A549 (cell line): ENCODE measurements at regions of chr11 and their contacts with region 1.

Region 1: DNA sequence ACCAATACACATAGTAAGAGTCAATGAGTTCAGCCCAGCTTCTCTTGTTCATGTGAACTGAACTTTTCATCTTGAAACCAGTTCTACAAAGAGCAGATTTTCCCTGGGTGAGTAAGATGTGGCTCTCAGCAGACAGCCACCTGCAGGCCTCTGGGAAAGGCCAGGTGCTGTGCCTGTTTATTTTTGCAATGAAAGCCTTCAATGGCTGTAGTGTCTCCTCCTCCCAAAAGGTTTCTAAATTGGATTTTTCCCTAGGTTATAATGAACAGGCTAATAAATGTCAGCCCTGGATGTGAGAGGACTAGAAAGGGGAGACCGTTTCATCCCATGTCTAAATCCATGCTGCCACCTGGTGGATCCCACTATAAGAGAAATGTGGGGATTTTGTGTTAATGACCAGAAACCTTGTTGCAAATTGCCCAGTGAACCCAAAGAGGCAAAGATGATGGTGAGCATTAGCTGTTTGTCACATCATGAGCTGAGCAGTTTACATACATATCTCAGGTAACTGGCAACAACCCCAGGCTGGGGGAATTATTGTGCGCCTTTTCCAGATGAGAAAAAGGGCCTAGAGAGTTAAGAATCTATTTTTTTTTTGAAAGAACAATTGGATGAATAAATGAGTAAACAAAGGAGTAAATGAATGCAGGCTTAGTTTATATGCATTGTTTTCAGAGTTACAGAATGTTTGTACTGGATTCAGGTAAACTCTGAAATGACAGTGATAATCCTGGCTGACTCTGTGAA is 12.7 kb downstream of the C11orf91 start:
- DNase-seq: peak; percentile 70 to 76
- ATAC-seq: no peak
- H3K4me3 ChIP-seq: no peak overlapping the region
- H3K27ac ChIP-seq: peak overlapping the region; percentile 94 to 96; a peak in 5 of 6 replicates
- H3K4me1 ChIP-seq: peaks cover 45% of the 10 kb centered on the region
- CTCF ChIP-seq: peak; percentile 92
- EP300 ChIP-seq: no peak
- POLR2A ChIP-seq: no peak
- RAD21 ChIP-seq: peak; percentile 98 to 99

Region 2: DNA sequence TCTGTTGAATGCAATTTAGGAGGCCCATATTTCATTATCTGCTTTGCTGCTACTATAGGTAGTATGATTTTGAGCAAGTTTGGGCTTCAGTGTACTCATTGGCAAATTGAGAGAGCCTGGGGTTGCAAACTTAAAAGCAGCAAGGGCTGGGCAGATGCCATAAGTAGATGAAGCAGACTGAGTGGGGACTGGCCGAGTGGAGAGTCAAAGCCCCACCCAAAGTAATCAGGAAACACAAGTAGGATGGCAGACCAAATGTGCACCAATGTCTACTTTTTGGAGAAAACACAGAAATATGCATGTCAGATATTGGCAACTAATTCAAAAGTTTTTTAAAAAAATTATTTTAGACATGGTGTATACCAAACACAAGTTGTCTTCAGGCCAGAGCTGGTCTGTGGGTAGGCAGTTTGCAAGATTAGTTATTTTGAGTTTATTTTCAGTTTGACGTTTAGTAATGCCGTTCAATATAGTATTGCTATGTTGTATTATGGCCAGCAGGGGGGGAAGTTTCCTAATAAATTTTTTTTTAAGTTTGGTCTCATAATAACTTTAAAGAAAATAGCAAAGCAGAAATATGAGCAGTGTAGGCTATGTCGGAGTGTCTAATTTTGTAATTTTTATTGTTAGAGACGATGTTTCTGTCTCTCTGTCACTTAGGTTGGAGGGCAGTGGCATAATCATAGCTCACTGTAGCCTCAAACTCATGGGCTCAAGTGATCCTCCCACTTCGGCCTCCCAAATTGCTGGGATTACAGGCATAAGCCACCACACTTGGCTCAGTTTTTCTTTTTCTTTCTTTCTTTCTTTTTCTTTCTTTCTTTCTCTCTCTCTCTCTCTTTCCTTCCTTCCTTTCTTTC is 325.6 kb before region 1 on chr11:
- CTCF ChIA-PET with region 1: interaction called, 216 read pairs
- POLR2A ChIA-PET with region 1: no interaction called
- DNase-seq: peak; percentile 15 to 47
- ATAC-seq: peak; percentile 33 to 75; a peak in 4 of 6 replicates
- H3K4me3 ChIP-seq: no peak overlapping the region
- H3K27ac ChIP-seq: no peak overlapping the region
- H3K4me1 ChIP-seq: no peaks in the 10 kb centered on the region
- CTCF ChIP-seq: peak; percentile 83
- EP300 ChIP-seq: no peak
- POLR2A ChIP-seq: no peak
- RAD21 ChIP-seq: peak; percentile 85 to 92

Region 3: GRCh38 chr11:33542921-33543320 is 145.0 kb before region 1 on chr11:
- CTCF ChIA-PET with region 1: interaction called, 27 read pairs
- POLR2A ChIA-PET with region 1: no interaction called
- DNase-seq: peak; percentile 55 to 86
- ATAC-seq: peak; percentile 81 to 95; a peak in 5 of 6 replicates
- H3K4me3 ChIP-seq: no peak overlapping the region
- H3K27ac ChIP-seq: no peak overlapping the region
- H3K4me1 ChIP-seq: no peaks in the 10 kb centered on the region
- CTCF ChIP-seq: peak; percentile 68
- EP300 ChIP-seq: no peak
- POLR2A ChIP-seq: no peak
- RAD21 ChIP-seq: peak; percentile 71 to 77

Region 4: DNA sequence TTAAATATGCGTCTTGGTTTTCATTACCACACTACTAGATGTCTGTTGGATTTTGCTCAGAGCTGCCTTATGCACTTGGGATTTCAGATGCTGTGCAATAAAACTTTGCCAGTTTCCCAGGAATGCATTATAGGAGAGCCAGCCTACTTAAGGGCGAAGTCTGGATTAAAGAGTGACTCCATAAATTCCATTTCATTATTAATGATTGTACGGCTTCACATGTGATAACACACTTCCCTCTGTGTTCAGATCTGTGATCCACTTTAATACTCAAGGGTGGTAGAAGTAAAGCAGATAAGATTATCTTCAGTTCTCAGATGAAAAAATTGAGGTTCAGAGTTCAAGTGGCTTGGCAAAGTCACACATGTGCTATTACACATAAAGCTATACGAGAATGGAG is 97.5 kb before region 1 on chr11:
- CTCF ChIA-PET with region 1: no interaction called
- POLR2A ChIA-PET with region 1: no interaction called
- DNase-seq: no peak
- ATAC-seq: no peak
- H3K4me3 ChIP-seq: no peak overlapping the region
- H3K27ac ChIP-seq: no peak overlapping the region
- H3K4me1 ChIP-seq: no peaks in the 10 kb centered on the region
- CTCF ChIP-seq: no peak
- EP300 ChIP-seq: no peak
- POLR2A ChIP-seq: no peak
- RAD21 ChIP-seq: no peak

Region 5: GRCh38 chr11:33700425-33701271 is 12.7 kb after region 1 on chr11 and contains the start of gene C11orf91:
- CTCF ChIA-PET with region 1: interaction called, 10 read pairs
- POLR2A ChIA-PET with region 1: interaction called, 74 read pairs
- DNase-seq: peak; percentile 70 to 93
- ATAC-seq: peak; percentile 77 to 85
- H3K4me3 ChIP-seq: peak within 1 kb of the TSS; percentile 52
- H3K27ac ChIP-seq: peak within 1 kb of the TSS; percentile 82 to 89
- H3K4me1 ChIP-seq: peaks cover 54% of the 10 kb centered on the region
- CTCF ChIP-seq: no peak
- EP300 ChIP-seq: no peak
- POLR2A ChIP-seq: 0 out of 2 replicates have a peak, but pooled peaks have one; percentile 16
- RAD21 ChIP-seq: no peak
- polyA plus RNA-seq, gene C11orf91: 0.42 TPM in 1 of 2 replicates, not detected in the other

Region 6: DNA sequence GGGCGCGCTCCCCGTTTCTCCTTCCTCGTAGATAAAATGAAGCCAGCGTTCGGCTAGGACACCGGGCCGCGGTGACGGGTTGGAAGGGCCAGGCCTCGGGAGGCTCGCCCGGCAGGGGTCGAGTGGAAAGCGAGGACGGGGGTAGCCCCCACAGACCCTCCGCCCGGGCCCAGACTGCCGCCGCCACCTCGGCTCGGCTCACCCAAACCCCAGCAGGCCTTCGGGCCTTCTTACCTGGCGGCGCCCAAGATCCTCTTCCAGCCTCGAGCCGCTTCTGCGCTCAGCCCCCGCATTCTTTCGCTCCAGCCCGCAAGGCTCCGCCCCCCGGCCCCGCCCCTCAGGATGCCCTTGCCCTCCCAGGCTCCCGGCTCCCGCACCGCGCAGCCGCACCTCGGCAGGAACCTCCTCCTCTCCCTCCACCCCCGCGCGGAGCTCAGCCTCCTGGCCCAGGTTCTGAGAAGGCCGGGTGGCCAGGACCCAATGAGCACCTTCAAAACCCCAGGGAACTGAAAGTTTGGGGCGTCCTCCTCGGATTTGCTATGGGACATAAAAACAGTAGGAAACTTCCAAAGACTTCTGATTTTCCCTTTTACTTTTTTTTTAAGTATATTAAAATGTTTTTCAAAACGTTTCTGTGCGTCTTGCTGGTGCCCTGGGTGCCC is 48.4 kb after region 1 on chr11 and contains the start of gene CD59:
- CTCF ChIA-PET with region 1: interaction called, 9 read pairs
- POLR2A ChIA-PET with region 1: interaction called, 42 read pairs
- DNase-seq: peak; percentile 93 to 94
- ATAC-seq: peak; percentile 96
- H3K4me3 ChIP-seq: peak within 1 kb of the TSS; percentile 75
- H3K27ac ChIP-seq: peak within 1 kb of the TSS; percentile 85 to 93
- H3K4me1 ChIP-seq: peaks cover 34% of the 10 kb centered on the region
- CTCF ChIP-seq: no peak
- EP300 ChIP-seq: no peak
- POLR2A ChIP-seq: peak; percentile 83
- RAD21 ChIP-seq: no peak
- polyA plus RNA-seq, gene CD59: 335 and 499 TPM in 2 replicates

Region 7: GRCh38 chr11:33930317-33931021 is 242.6 kb after region 1 on chr11:
- CTCF ChIA-PET with region 1: no interaction called
- POLR2A ChIA-PET with region 1: no interaction called
- DNase-seq: no peak
- ATAC-seq: no peak
- H3K4me3 ChIP-seq: no peak overlapping the region
- H3K27ac ChIP-seq: no peak overlapping the region
- H3K4me1 ChIP-seq: no peaks in the 10 kb centered on the region
- CTCF ChIP-seq: no peak
- EP300 ChIP-seq: no peak
- POLR2A ChIP-seq: no peak
- RAD21 ChIP-seq: no peak